SK-N-SH (cell line): ENCODE measurements at regions of chr1 and their contacts with region 1.

Region 1: DNA sequence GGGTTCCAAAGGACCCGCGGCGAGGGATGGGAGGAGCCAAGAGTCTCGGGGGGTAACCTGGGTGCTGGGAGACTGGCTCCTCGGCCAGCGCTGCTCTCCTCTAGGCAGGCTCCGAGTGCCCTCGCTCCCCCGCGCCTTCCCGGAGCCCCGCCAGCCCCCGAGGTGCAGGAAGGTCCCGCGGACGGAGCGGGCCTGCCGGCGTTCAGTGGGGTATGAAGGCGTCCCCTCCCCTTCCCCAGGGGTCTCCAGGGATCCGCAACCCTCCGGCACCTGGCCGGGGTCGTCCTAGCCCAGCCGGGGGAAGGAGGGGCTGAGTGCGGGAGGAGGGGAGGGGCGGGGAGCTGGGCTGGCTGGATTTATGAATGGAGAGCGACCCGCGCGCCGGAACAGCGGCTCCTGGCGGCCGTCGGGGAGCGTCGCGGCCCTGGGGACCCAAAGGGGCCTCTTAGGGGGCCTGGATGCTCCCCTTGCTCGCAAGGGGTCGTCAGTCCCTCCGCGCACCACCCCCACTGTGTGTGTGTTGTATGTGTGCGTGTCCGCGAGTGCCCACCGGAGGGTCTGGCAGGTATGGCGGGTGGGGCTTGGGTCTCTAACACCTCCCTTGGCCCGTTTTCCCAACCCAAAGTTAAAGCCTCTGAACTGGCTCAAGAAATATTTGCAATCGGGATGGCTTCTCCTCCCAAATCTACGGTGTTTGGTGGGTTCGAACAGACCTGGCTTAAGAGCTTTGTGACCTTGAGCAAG is 600 bp downstream of the HCRTR1 start:
- DNase-seq: peak; percentile 94
- H3K4me3 ChIP-seq: peak overlapping the region; percentile 58 to 68
- H3K27ac ChIP-seq: no peak overlapping the region; a peak in 1 of 4 replicates
- H3K4me1 ChIP-seq: peaks cover 0 to 24% of the 10 kb centered on the region in 2 experiments; a peak in 1 of 4 replicates
- H3K27me3 ChIP-seq: no peaks in the 10 kb centered on the region
- CTCF ChIP-seq: peak; percentile 83
- EP300 ChIP-seq: no peak
- RAD21 ChIP-seq: peak; percentile 56

Region 2: DNA sequence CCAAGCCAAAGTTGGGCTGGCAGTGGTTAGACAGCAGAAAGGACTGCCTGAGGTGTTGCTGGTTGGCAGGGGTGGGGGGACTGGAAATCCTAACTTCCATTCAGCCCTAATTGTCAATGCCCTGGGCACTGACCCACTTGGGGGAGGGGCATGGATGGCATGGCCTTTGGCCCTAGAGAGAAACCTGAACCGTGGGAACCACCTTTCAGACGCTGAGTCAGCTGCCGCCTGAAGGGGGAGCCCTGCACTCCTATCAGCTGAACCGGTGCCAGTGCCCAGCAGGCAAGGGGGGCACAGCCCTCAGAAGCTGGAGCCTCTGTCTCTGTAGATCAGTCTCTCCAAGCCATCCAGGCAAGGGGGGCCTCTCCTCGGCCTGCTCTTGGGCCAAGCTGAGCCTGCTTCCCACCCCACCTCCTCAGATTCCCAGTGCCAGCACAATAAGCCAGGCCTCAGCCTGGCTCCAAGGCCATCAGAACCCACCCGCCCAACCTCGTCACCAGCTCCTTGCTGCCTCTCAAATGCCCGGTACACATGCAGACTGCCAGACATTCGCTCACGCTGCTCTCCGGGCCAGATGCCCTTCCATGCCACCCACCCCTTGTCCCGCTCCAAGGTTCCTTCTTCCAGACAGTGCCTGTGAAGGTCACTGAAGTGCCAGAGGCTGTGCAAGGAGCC is 30.2 kb before region 1 on chr1:
- CTCF ChIA-PET with region 1: interaction called, 37 read pairs
- POLR2A ChIA-PET with region 1: no interaction called
- DNase-seq: peak; percentile 94
- H3K4me3 ChIP-seq: no peak overlapping the region; a peak in 1 of 4 replicates
- H3K27ac ChIP-seq: no peak overlapping the region
- H3K4me1 ChIP-seq: peaks cover 10 to 18% of the 10 kb centered on the region in 2 experiments; a peak in 3 of 4 replicates
- H3K27me3 ChIP-seq: no peaks in the 10 kb centered on the region
- CTCF ChIP-seq: peak; percentile 78
- EP300 ChIP-seq: no peak
- RAD21 ChIP-seq: peak; percentile 58

Region 3: GRCh38 chr1:31605908-31606427 is 12.1 kb before region 1 on chr1:
- CTCF ChIA-PET with region 1: interaction called, 56 read pairs
- POLR2A ChIA-PET with region 1: no interaction called
- DNase-seq: no peak
- H3K4me3 ChIP-seq: no peak overlapping the region
- H3K27ac ChIP-seq: no peak overlapping the region
- H3K4me1 ChIP-seq: 0 out of 4 replicates have a peak, but pooled peaks cover 0 to 8% of the 10 kb centered on the region in 2 experiments
- H3K27me3 ChIP-seq: no peaks in the 10 kb centered on the region
- CTCF ChIP-seq: no peak
- EP300 ChIP-seq: no peak
- RAD21 ChIP-seq: no peak

Region 4: GRCh38 chr1:31639543-31639942 is 21.5 kb after region 1 on chr1:
- CTCF ChIA-PET with region 1: interaction called, 45 read pairs
- POLR2A ChIA-PET with region 1: no interaction called
- DNase-seq: no peak
- H3K4me3 ChIP-seq: no peak overlapping the region
- H3K27ac ChIP-seq: peak overlapping the region; percentile 13 to 81; a peak in 3 of 4 replicates
- H3K4me1 ChIP-seq: peaks cover 14 to 35% of the 10 kb centered on the region in 2 experiments; a peak in 3 of 4 replicates
- H3K27me3 ChIP-seq: no peaks in the 10 kb centered on the region
- CTCF ChIP-seq: no peak
- EP300 ChIP-seq: no peak
- RAD21 ChIP-seq: no peak

Region 5: GRCh38 chr1:31795801-31796621 is 177.9 kb after region 1 on chr1:
- CTCF ChIA-PET with region 1: no interaction called
- POLR2A ChIA-PET with region 1: no interaction called
- DNase-seq: peak; percentile 61
- H3K4me3 ChIP-seq: no peak overlapping the region
- H3K27ac ChIP-seq: no peak overlapping the region
- H3K4me1 ChIP-seq: peaks cover 11 to 31% of the 10 kb centered on the region in 2 experiments; a peak in 3 of 4 replicates
- H3K27me3 ChIP-seq: no peaks in the 10 kb centered on the region
- CTCF ChIP-seq: no peak
- EP300 ChIP-seq: no peak
- RAD21 ChIP-seq: no peak